ENCODE measurements at regions of chr3 and their contacts with region 1.

Region 1: DNA sequence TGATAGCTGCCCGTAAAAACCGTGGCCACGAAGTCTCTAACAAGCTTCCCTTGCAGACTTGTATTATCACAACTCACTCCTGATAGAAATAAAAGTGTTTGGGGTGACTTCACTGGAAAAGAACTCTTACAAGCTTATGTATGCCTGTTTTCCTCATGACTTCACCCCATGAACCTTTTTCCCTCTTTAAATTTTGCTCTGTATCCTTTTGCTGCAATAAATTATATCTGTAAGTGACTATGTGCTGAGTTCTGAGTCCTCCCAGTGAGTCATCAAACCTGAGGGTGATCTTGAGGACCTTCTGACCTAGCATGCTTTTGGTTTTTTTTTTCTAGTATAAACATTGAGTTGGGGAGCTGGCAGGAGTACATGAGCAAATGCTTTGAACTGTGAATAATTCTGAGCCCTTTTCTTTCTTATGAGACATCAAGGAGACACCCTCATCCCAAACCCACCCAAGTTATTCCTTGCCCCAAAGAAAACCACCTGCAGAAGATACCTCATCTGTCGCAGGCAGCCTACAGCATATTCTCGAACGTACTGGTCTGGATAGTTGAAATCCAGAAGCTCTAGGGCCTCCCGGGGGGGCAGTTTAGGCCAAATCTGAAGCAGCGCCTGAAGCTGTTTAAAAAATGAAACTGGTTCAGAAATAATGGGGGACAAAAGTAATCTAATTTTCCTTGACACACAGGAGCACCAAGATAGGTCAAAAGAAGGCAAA is 85.9 kb downstream of the FAIM start:
- DNase-seq: no peak
- H3K4me3 ChIP-seq: no peak overlapping the region
- H3K4me1 ChIP-seq: no peaks in the 10 kb centered on the region
- H3K27me3 ChIP-seq: no peaks in the 10 kb centered on the region

Region 2: DNA sequence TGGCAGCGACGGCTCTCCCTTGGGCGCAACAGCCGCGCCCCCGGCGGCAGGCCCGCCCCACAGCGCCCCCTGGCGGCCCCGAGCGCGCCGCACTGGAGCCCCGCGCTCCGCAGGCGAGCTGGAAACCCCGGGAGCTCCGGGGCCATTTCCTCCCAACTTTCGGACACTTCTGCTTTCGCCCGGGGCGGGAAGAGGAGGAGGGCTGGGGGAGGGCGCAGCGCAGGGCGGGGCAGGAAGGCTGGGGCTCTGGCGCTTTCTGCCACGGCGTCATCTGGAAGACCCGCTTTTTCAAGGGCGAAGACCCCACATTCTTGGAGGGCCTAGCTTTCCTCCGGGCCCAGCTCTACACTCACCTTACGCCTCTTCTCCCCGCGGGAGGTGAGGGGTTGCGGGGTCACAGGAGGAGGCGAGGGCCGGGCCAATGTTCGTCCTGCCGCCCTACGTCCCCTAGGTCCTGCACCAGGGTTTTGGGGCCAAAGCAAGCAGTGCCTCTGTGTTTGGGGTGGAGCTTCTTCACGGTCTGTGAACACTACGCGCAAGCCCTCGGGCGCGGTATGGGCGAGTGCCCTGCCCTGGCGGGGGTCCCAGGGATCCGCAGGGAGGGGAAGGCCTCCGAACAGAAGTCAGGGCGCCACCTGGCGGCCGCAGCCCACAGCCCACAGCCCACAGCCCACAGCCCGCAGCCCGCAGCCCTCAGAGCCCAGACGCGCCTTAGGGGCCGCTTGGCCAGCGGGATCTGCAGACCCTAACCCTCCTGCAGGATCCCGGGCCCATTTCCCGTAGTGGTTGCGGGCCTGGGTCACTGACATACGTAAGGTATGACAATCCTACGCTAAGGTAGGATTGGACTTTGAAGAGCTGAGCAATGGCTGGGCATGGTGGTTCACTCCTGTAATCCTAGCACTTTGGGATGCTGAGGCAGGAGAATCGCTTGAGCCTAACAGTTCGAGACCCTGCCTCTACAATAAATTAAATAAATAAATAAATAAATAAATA is 221.4 kb after region 1 on chr3:
- in situ Hi-C with region 1: loop called (anchors 5 kb)
- DNase-seq: peak; percentile 81 to 97
- H3K4me3 ChIP-seq: peak overlapping the region; percentile 62
- H3K4me1 ChIP-seq: 0 out of 2 replicates have a peak, but pooled peaks cover 2% of the 10 kb centered on the region
- H3K27me3 ChIP-seq: no peaks in the 10 kb centered on the region